Activated naive CD4-positive, alpha-beta T cell treated with anti-CD3 and anti-CD28 coated beads, Interleukin-2, amount 10 ng/mL, durations not matched to agents 7 days and 5 days (primary cell): ENCODE measurements at regions of chr7 and their contacts with region 1.

Region 1: GRCh38 chr7:142357953-142358520 is 100.2 kb upstream of the PRSS58 start:
- DNase-seq: peak; percentile 46
- H3K4me3 Mint-ChIP-seq: no peak overlapping the region
- H3K27ac Mint-ChIP-seq: no peak overlapping the region
- H3K4me1 Mint-ChIP-seq: peaks cover 31% of the 10 kb centered on the region
- H3K27me3 Mint-ChIP-seq: peaks cover 37% of the 10 kb centered on the region

Region 2: GRCh38 chr7:142338633-142339501 is 19.2 kb before region 1 on chr7:
- CTCF ChIA-PET with region 1: interaction called, 10 read pairs
- DNase-seq: no peak
- H3K4me3 Mint-ChIP-seq: no peak overlapping the region
- H3K27ac Mint-ChIP-seq: peak overlapping the region; percentile 20
- H3K4me1 Mint-ChIP-seq: peaks cover 8% of the 10 kb centered on the region
- H3K27me3 Mint-ChIP-seq: peaks cover 22% of the 10 kb centered on the region

Region 3: GRCh38 chr7:142345811-142346210 is 12.2 kb before region 1 on chr7:
- CTCF ChIA-PET with region 1: interaction called, 10 read pairs
- DNase-seq: peak; percentile 60
- H3K4me3 Mint-ChIP-seq: peak overlapping the region; percentile 20
- H3K27ac Mint-ChIP-seq: peak overlapping the region; percentile 84
- H3K4me1 Mint-ChIP-seq: peaks cover 24% of the 10 kb centered on the region
- H3K27me3 Mint-ChIP-seq: peaks cover 19% of the 10 kb centered on the region

Region 4: GRCh38 chr7:142385491-142386340 is 27.7 kb after region 1 on chr7:
- CTCF ChIA-PET with region 1: interaction called, 18 read pairs
- DNase-seq: peak; percentile 64
- H3K4me3 Mint-ChIP-seq: no peak overlapping the region
- H3K27ac Mint-ChIP-seq: peak overlapping the region; percentile 0
- H3K4me1 Mint-ChIP-seq: peaks cover 27% of the 10 kb centered on the region
- H3K27me3 Mint-ChIP-seq: peaks cover 31% of the 10 kb centered on the region